ENCODE measurements at regions of chr12 and their contacts with region 1.

Region 1: GRCh38 chr12:15151161-15152120 is 69.8 kb downstream of the RERG start:
- DNase-seq: no peak
- ATAC-seq: peak; percentile 56 to 62
- H3K4me3 ChIP-seq: no peak overlapping the region
- H3K27ac ChIP-seq: peak overlapping the region; percentile 34 to 59 (median 54)
- H3K4me1 ChIP-seq: peaks cover 0 to 9% of the 10 kb centered on the region in 2 donors
- H3K27me3 ChIP-seq: no peaks in the 10 kb centered on the region
- CTCF ChIP-seq: peak in 4 of 5 experiments; percentile 37 to 48 (median 48)
- POLR2A ChIP-seq: no peak

Region 2: GRCh38 chr12:15050659-15051058 is 100.8 kb before region 1 on chr12:
- in situ Hi-C with region 1: loop called in 1 of 4 experiments (anchors 25 kb)
- intact Hi-C with region 1: no loop called
- DNase-seq: no peak
- ATAC-seq: no peak
- H3K4me3 ChIP-seq: no peak overlapping the region
- H3K27ac ChIP-seq: no peak overlapping the region
- H3K4me1 ChIP-seq: no peaks in the 10 kb centered on the region
- H3K27me3 ChIP-seq: no peaks in the 10 kb centered on the region
- CTCF ChIP-seq: no peak
- POLR2A ChIP-seq: no peak

Region 3: DNA sequence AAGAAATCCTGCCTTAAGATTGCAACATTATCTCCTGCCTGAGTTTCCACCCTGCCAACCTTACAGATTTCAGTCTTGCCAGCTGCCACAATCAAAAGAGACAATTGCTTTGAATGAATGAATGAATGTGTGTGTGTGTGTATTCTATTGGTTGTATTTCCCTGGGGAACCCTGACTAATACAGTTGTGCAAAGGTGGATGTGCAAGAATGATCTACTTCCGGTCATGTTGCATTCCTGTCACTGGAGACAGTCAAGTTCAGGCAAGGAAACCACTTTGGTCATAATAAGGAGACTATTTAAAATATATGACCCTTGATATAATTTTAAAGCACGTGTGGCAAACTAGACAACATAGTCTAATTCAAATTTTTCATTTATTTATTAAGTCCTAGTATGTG is 56.7 kb after region 1 on chr12:
- in situ Hi-C with region 1: loop called in 1 of 4 experiments (anchors 5 kb)
- intact Hi-C with region 1: no loop called
- DNase-seq: no peak
- ATAC-seq: peak in 1 of 2 donors; percentile 52
- H3K4me3 ChIP-seq: no peak overlapping the region
- H3K27ac ChIP-seq: peak overlapping the region; percentile 63 to 68 (median 65)
- H3K4me1 ChIP-seq: peaks cover 8 to 26% of the 10 kb centered on the region in 2 donors
- H3K27me3 ChIP-seq: no peaks in the 10 kb centered on the region
- CTCF ChIP-seq: peak in 3 of 5 experiments; percentile 32 to 50 (median 40)
- POLR2A ChIP-seq: no peak

Region 4: GRCh38 chr12:15220994-15221885 is 69.8 kb after region 1 on chr12 and contains the start of gene RERG:
- in situ Hi-C with region 1: loop called in 1 of 4 experiments (anchors 5 kb)
- intact Hi-C with region 1: loop called (anchors 1 kb)
- DNase-seq: peak; percentile 48 to 52
- ATAC-seq: peak; percentile 89 to 97
- H3K4me3 ChIP-seq: peak within 1 kb of the TSS; percentile 54 to 60 (median 56)
- H3K27ac ChIP-seq: peak within 1 kb of the TSS; percentile 63 to 71 (median 70)
- H3K4me1 ChIP-seq: peaks cover 5 to 7% of the 10 kb centered on the region in 2 donors
- H3K27me3 ChIP-seq: no peaks in the 10 kb centered on the region
- CTCF ChIP-seq: peak; percentile 85 to 96 (median 91)
- POLR2A ChIP-seq: peak in 1 of 2 donors; percentile 22
- total RNA-seq, gene RERG: 4.3 to 6.5 (median 5.8) TPM

Region 5: DNA sequence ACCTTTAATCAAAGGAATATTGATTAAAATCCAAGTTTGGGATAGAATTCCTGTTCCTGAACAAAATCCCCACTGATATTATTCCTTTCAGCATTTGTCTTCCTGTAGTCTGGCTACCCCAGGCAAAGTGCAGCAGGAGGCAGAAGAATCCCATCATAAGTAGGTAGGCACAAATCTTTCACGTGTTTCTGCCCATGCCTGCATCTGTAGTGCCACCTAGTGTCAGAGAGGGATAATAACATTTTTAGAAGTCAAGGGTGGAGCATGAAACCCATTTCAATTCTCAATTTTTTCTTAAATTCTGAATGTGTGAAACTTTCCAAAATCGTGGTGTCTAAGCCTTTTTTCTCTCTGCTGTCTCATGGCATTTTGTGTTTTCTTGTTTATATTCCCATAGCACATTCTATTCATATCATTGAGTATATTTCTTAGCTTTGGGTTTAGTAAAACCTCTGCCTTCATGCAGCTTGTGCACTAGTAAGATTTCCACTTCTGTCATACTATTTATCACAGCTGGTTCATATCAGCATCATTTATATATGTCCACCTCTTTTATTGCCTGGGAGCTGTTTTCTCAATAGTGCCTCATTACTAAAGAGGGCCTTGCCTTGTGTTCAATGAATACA is 117.6 kb after region 1 on chr12:
- in situ Hi-C with region 1: loop called in 2 of 4 experiments (anchors 5 to 10 kb)
- intact Hi-C with region 1: loop called (anchors 1 kb)
- DNase-seq: peak in 1 of 2 donors; percentile 31
- ATAC-seq: peak; percentile 56 to 60
- H3K4me3 ChIP-seq: no peak overlapping the region
- H3K27ac ChIP-seq: no peak overlapping the region
- H3K4me1 ChIP-seq: peaks cover 0 to 3% of the 10 kb centered on the region in 2 donors
- H3K27me3 ChIP-seq: no peaks in the 10 kb centered on the region
- CTCF ChIP-seq: peak; percentile 66 to 86 (median 75)
- POLR2A ChIP-seq: no peak

Region 6: DNA sequence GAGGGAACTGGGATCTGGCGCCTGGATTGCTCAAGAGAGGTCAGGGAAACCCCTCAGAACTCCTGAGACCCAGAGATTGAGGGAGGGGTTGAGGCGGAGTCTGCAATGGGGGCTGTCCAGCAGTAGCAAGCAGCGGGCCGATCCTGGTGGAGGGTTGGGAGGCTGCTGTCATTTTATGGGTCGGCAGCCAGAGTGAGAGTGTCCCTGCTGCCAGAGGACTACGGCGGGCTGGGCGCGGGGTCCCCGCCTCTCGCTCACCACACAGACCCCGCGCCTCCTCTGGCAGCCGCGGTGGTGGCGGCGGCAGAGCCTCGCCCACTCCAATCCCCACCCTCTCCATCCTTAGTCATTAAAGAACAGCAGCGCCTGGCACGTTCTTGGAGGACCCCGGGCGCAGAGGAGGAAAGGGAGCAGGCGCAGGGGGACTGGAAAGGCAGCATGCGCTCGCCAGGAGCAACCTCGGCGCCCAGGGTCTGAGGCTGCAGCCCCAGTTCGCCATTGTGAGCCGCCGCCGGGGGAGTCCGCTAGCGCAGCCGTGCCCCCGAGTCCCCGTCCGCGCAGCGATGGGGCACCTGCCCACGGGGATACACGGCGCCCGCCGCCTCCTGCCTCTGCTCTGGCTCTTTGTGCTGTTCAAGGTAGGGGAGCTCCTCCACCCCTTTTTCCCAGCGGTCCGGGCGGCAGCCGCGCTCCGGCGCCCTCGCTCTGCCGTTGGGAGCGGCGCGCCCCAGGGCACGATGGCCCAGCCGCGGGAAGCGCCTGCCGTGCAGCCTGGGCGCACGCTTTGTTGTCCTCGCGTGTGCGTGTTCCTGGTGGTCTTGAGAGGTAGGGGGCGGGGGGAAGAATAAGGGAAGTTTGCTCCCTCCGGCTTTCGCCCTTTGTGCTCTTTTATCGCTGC is 171.0 kb after region 1 on chr12 and contains the start of gene PTPRO:
- in situ Hi-C with region 1: no loop called
- intact Hi-C with region 1: no loop called
- DNase-seq: no peak
- ATAC-seq: no peak
- H3K4me3 ChIP-seq: peak within 1 kb of the TSS; percentile 41 to 50 (median 45)
- H3K27ac ChIP-seq: no peak within 1 kb of the TSS
- H3K4me1 ChIP-seq: peaks cover 8 to 10% of the 10 kb centered on the region in 2 donors
- H3K27me3 ChIP-seq: peaks cover 0 to 19% (median 18%) of the 10 kb centered on the region in 3 donors
- CTCF ChIP-seq: no peak
- POLR2A ChIP-seq: no peak
- total RNA-seq, gene PTPRO: 0.19 to 0.94 (median 0.70) TPM